Gastrocnemius medialis (tissue), 4 donors: ENCODE measurements at regions of chr18 and their contacts with region 1.

Region 1: GRCh38 chr18:11851146-11851805 is at the start of gene CHMP1B:
- DNase-seq: peak; percentile 97 to 99
- ATAC-seq: peak; percentile 59 to 68
- H3K4me3 ChIP-seq: peak within 1 kb of the TSS; percentile 72 to 92 (median 84)
- H3K27ac ChIP-seq: peak within 1 kb of the TSS; percentile 90 to 99 (median 96)
- H3K4me1 ChIP-seq: peaks cover 25 to 38% of the 10 kb centered on the region in 2 donors
- H3K27me3 ChIP-seq: no peaks in the 10 kb centered on the region
- CTCF ChIP-seq: peak in 1 of 5 experiments; percentile 21
- POLR2A ChIP-seq: peak; percentile 100
- total RNA-seq, gene CHMP1B: 347 to 634 (median 407) TPM

Region 2: GRCh38 chr18:10530852-10531251 is 1320.4 kb before region 1 on chr18:
- in situ Hi-C with region 1: no loop called
- intact Hi-C with region 1: loop called (anchors 10 kb)
- DNase-seq: no peak
- ATAC-seq: peak in 1 of 2 donors; percentile 55
- H3K4me3 ChIP-seq: no peak overlapping the region
- H3K27ac ChIP-seq: peak overlapping the region in 2 of 4 donors; percentile 10 to 56
- H3K4me1 ChIP-seq: peaks cover 19 to 22% of the 10 kb centered on the region in 2 donors
- H3K27me3 ChIP-seq: no peaks in the 10 kb centered on the region
- CTCF ChIP-seq: no peak
- POLR2A ChIP-seq: no peak

Region 3: DNA sequence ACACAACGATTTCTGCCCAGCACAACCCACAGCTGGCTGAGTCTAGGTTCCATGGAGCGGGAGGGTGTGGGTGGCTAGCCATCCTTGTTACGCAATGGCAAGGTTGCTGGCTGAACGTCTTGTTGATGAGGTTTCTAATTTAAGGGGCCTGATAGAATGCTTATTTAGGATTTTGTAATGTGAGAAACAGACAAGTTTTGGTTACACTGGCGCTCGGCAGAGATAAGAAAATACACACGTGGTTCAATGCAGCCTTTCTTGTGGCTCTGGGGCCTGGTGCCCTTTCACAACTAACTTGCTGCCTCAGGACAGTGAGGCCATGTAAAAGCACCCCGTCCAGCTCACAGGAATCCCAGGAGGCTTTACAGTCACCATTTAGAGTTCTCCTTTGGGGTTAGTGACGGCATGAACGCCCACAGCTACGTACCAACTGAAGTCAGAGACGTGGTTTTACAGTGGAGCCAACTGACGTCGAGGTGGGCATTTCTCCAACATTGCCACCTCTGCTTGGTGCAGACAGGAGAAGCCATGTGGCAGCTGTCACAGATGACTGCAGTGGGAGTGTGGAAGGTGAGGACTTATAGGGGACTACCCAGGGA is 672.2 kb before region 1 on chr18:
- in situ Hi-C with region 1: loop called in 1 of 4 experiments (anchors 25 kb)
- intact Hi-C with region 1: loop called (anchors 10 kb)
- DNase-seq: peak; percentile 86 to 92
- ATAC-seq: peak; percentile 88
- H3K4me3 ChIP-seq: peak overlapping the region; percentile 13 to 32 (median 22)
- H3K27ac ChIP-seq: peak overlapping the region; percentile 88 to 94 (median 91)
- H3K4me1 ChIP-seq: peaks cover 45 to 48% of the 10 kb centered on the region in 2 donors
- H3K27me3 ChIP-seq: no peaks in the 10 kb centered on the region
- CTCF ChIP-seq: no peak
- POLR2A ChIP-seq: peak in 1 of 2 donors; percentile 41

Region 4: GRCh38 chr18:11324956-11325873 is 526.1 kb before region 1 on chr18:
- in situ Hi-C with region 1: no loop called
- intact Hi-C with region 1: no loop called
- DNase-seq: no peak
- ATAC-seq: no peak
- H3K4me3 ChIP-seq: no peak overlapping the region
- H3K27ac ChIP-seq: peak overlapping the region; percentile 43 to 72 (median 62)
- H3K4me1 ChIP-seq: peaks cover 16 to 29% of the 10 kb centered on the region in 2 donors
- H3K27me3 ChIP-seq: no peaks in the 10 kb centered on the region
- CTCF ChIP-seq: no peak
- POLR2A ChIP-seq: no peak

Region 5: DNA sequence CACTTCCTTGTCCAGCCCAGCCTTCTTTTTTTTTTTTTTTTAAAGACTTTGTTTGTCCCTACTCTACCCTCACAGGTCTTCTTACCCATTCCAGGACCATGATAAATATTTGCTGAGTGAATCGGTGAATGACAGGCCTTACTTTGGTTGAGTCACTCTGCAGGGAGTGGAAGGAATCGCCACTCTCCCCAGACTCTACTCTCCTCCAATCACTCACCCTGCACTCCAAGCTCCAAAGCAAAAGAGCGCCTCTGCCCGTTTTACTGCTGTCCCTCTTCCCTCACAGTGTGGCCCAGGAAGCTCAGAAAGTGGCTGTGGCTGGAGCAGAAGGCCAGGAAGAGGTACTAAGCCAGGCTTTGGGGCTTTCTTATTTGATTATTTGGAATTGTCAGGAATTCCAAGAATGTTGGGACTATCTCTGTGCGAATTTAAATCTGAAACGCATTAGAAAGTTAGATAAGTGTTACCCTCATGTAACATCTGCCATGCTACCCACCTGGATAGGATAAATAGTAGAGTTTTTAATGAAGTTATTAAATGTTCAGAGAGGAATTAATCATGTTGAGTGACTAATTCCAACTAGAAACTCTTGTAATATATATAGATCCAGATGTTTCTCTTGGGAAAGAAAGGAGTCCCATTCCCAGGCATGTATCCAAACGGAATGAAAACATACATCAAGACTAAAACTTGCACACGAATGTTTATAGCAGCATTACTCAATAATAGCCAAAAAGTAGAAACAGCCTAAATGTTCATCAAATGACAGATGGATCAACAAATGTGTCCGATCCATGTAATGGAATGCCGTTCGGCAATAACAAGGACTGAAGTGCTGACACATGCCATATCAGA is 43.0 kb before region 1 on chr18:
- in situ Hi-C with region 1: no loop called
- intact Hi-C with region 1: loop called (anchors 5 kb)
- DNase-seq: no peak
- ATAC-seq: no peak
- H3K4me3 ChIP-seq: no peak overlapping the region
- H3K27ac ChIP-seq: no peak overlapping the region
- H3K4me1 ChIP-seq: peaks cover 0 to 5% of the 10 kb centered on the region in 2 donors
- H3K27me3 ChIP-seq: no peaks in the 10 kb centered on the region
- CTCF ChIP-seq: no peak
- POLR2A ChIP-seq: no peak

Region 6: GRCh38 chr18:11947214-11948191 is 96.2 kb after region 1 on chr18:
- in situ Hi-C with region 1: no loop called
- intact Hi-C with region 1: loop called (anchors 2 kb)
- DNase-seq: peak; percentile 95
- ATAC-seq: peak; percentile 85 to 92
- H3K4me3 ChIP-seq: peak overlapping the region; percentile 60 to 75 (median 68)
- H3K27ac ChIP-seq: peak overlapping the region; percentile 91 to 100 (median 96)
- H3K4me1 ChIP-seq: peaks cover 24 to 35% of the 10 kb centered on the region in 2 donors
- H3K27me3 ChIP-seq: no peaks in the 10 kb centered on the region
- CTCF ChIP-seq: peak in 1 of 5 experiments; percentile 9
- POLR2A ChIP-seq: peak; percentile 67 to 79

Region 7: DNA sequence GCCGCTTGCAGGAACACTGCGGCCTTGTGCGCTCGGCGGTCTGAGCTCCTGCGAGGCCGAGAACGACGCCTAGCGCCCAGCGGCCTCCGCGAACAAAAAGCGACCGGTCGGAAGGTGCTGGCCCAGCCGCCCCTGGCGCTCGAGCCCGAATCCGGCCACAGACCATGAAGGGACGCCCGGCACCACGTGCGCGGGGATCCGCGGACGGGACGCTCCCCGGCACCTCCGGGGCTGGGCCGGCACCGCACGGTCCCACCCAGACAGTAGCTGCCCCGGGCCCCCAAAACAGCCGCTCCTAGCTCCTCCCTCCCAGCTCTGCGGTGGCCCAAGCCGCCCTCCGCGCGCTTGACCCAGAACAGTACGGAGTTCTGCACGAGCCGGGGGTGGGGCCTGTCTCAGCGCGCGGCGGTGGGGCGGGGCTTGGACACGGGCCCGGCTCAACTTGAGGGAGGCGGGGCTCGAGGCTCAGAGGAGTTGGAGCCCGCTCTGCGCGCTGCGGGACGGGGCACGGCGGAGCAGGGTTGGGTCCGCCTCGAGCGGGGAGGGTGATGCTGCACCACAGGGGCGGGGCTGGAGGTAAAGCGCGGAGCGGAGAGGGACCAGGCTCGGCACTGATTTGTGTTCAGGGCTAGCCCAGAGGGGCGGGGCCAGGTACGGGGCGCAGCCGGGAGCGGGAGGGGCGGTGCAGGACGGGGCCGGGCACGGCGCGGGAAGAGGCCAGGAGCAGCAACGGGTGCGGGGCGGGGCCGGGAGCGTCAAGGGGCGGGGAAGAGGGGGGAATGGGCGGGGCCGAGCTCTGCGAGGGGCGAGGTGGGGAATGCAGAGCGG is 129.5 kb after region 1 on chr18:
- in situ Hi-C with region 1: no loop called
- intact Hi-C with region 1: loop called (anchors 2 kb)
- DNase-seq: peak; percentile 99
- ATAC-seq: peak; percentile 67 to 72
- H3K4me3 ChIP-seq: peak overlapping the region; percentile 71 to 94 (median 86)
- H3K27ac ChIP-seq: peak overlapping the region; percentile 97 to 100 (median 99)
- H3K4me1 ChIP-seq: peaks cover 21 to 38% of the 10 kb centered on the region in 2 donors
- H3K27me3 ChIP-seq: no peaks in the 10 kb centered on the region
- CTCF ChIP-seq: peak in 4 of 5 experiments; percentile 14 to 41 (median 21)
- POLR2A ChIP-seq: peak; percentile 98 to 99

Region 8: DNA sequence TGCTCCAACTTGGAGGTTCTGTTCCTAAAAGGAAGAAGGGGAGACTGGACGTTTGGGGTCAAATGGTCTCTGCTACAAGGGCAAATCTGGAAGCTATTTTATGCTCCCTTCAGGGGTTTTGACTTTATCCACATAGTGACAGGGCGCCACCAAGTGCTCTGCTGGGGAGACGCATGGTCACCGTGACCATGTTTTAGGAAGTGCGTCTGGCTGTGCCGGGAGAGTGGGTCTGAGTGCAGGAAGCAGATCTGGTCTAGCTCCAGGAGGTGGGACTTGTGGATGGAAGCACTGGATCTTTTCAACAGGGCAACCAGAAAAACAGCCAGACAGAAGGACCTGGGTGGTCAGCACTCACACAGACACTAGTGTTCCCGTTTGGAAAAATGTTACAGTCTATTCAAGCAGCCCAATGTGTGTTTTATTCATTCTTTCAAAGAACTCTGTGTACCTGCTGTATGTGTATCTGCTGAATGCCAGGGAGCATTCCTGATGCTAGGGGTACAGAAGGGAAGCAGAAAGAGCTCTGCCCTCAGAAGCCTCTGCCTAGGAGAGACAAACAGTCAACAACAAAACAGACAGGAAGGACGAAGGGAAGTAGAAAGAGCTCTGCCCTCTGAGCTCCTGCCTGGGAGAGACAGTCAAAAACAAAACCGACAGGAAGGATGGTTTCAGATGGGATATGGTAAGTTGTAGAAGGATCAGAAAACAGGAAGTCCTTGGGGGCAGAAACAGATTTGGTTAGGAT is 144.3 kb after region 1 on chr18:
- in situ Hi-C with region 1: loop called in 1 of 4 experiments (anchors 10 kb)
- intact Hi-C with region 1: no loop called
- DNase-seq: peak; percentile 57 to 59
- ATAC-seq: peak; percentile 48 to 59
- H3K4me3 ChIP-seq: peak overlapping the region in 1 of 4 donors; percentile 21
- H3K27ac ChIP-seq: peak overlapping the region; percentile 83 to 100 (median 98)
- H3K4me1 ChIP-seq: peaks cover 65 to 78% of the 10 kb centered on the region in 2 donors
- H3K27me3 ChIP-seq: no peaks in the 10 kb centered on the region
- CTCF ChIP-seq: peak; percentile 64 to 88 (median 76)
- POLR2A ChIP-seq: no peak